CD4-positive, alpha-beta memory T cell (primary cell): ENCODE measurements at regions of chr9 and their contacts with region 1.

Region 1: GRCh38 chr9:75265525-75265972 is 177.2 kb downstream of the OSTF1 start:
- DNase-seq: peak in 4 of 5 donors; percentile 34 to 45 (median 41)
- H3K4me3 ChIP-seq: no peak overlapping the region
- H3K4me3 Mint-ChIP-seq: peak overlapping the region in 1 of 8 donors; percentile 16
- H3K27ac ChIP-seq: no peak overlapping the region
- H3K27ac Mint-ChIP-seq: no peak overlapping the region
- H3K4me1 ChIP-seq: no peaks in the 10 kb centered on the region
- H3K4me1 Mint-ChIP-seq: peaks cover 0 to 5% (median 2%) of the 10 kb centered on the region in 4 donors
- H3K27me3 ChIP-seq: no peaks in the 10 kb centered on the region
- H3K27me3 Mint-ChIP-seq: no peaks in the 10 kb centered on the region

Region 2: GRCh38 chr9:75108555-75108954 is 157.0 kb before region 1 on chr9:
- CTCF ChIA-PET with region 1: no interaction called
- POLR2A ChIA-PET with region 1: no interaction called
- intact Hi-C with region 1: no loop called
- DNase-seq: peak in 2 of 5 donors; percentile 18 to 55
- H3K4me3 ChIP-seq: no peak overlapping the region
- H3K4me3 Mint-ChIP-seq: peak overlapping the region in 6 of 8 donors; percentile 15 to 59 (median 53)
- H3K27ac ChIP-seq: no peak overlapping the region
- H3K27ac Mint-ChIP-seq: peak overlapping the region; percentile 37 to 96 (median 81)
- H3K4me1 ChIP-seq: peaks cover 88% of the 10 kb centered on the region
- H3K4me1 Mint-ChIP-seq: peaks cover 54 to 85% (median 68%) of the 10 kb centered on the region in 4 donors
- H3K27me3 ChIP-seq: no peaks in the 10 kb centered on the region
- H3K27me3 Mint-ChIP-seq: no peaks in the 10 kb centered on the region

Region 3: DNA sequence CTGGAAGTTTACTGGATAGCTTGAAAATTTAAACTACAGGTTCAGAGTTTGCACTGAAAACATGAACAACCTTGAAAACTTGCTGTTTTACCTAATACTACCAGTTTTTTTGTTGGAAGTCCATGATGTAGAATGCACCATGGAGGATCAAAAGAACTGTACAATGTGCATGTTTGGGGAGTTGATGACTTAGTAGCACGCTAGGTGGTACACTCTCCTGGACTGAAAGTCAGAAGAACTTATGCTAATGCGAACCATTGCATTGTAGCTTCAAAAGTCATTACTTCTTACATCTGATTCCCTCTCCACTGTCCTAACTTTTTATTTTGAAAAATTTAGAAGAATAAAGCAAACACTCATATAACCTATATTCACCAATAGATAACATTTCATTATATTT is 33.8 kb after region 1 on chr9:
- CTCF ChIA-PET with region 1: no interaction called
- POLR2A ChIA-PET with region 1: no interaction called
- intact Hi-C with region 1: no loop called
- DNase-seq: no peak
- H3K4me3 ChIP-seq: no peak overlapping the region
- H3K4me3 Mint-ChIP-seq: no peak overlapping the region
- H3K27ac ChIP-seq: no peak overlapping the region
- H3K27ac Mint-ChIP-seq: no peak overlapping the region
- H3K4me1 ChIP-seq: no peaks in the 10 kb centered on the region
- H3K4me1 Mint-ChIP-seq: no peaks in the 10 kb centered on the region
- H3K27me3 ChIP-seq: no peaks in the 10 kb centered on the region
- H3K27me3 Mint-ChIP-seq: no peaks in the 10 kb centered on the region

Region 4: DNA sequence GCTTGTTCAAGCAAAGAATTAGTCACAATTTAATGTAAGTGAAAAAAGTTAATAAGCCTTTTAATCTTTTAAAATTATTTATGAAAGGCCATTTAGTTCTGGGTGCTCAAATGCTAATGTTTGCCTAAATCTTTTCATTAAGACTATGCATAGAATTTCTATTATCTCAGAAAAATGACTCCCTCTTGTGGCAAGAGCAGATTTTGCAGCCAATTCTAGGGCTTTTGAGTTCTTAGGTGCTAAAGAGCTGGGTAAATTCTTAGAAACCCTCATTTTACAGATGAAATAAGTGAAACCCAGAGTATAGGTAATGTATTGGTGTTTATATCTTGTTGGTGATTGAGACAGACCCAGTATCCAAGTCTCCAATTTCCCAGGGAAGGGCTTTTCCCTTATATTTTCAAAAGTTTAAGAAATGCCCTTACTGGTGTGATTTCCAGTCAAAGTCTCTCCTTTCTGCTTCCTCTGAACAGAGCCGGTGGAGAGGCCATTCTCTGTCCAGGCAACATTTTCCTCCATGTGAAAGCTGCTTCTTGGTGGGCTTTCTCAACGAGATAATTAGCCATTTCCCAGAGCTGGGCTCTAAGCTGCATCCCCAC is 600.8 kb after region 1 on chr9:
- CTCF ChIA-PET with region 1: no interaction called
- POLR2A ChIA-PET with region 1: no interaction called
- intact Hi-C with region 1: loop called (anchors 5 kb)
- DNase-seq: peak in 4 of 5 donors; percentile 18 to 38 (median 37)
- H3K4me3 ChIP-seq: no peak overlapping the region
- H3K4me3 Mint-ChIP-seq: no peak overlapping the region
- H3K27ac ChIP-seq: no peak overlapping the region
- H3K27ac Mint-ChIP-seq: no peak overlapping the region
- H3K4me1 ChIP-seq: no peaks in the 10 kb centered on the region
- H3K4me1 Mint-ChIP-seq: peaks cover 0 to 8% (median 6%) of the 10 kb centered on the region in 4 donors
- H3K27me3 ChIP-seq: no peaks in the 10 kb centered on the region
- H3K27me3 Mint-ChIP-seq: peaks cover 0 to 7% of the 10 kb centered on the region in 2 donors